CD8-positive, alpha-beta T cell (primary cell): ENCODE measurements at regions of chr17 and their contacts with region 1.

Region 1: DNA sequence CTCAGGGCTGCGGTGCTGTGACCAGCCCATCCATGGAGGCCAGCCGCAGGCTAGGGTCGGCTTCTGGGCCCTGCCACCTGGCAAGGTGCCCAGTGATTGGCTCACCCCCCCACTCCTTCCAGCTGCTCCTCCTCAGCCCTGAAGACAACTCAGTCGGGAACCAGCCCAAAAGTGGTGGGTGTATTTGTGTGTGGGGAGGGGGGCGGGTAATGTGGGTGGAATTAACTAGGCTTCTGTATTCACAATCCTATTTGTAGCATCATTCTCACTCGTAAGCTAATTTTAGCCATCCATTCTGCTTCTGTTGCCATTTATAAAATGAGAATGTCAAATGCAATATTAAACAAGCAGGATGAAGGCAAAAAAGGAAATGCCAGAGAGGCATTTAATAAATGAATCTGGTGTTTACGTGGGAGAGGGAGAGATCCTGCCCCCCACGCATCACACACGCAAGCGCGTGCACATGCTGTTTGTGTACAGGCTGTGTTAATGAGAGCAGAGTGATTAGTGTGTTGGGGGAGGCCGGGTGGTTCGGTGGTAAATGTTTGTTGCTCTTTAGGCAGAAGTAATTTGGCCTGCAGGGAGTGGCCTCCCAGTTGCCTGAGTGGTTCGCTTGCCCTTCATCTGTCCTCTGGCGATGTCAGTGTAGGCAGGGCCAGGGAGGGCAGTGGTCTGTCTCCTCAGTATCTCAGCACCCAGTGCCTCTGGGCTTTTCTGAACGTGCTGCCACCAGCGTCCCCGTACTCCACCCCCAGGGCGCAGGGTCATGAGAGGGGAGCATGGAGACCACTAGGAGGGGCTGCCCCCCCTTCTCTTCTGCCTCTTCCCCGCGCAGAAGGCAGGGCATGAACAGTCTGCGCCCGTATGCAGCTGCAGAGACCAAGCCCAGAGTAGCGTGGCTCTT is 140.1 kb downstream of the CCDC182 start:
- DNase-seq: peak in 8 of 9 experiments; percentile 15 to 83 (median 60)
- ATAC-seq: peak; percentile 60
- H3K4me3 ChIP-seq: peak overlapping the region in 1 of 2 experiments; percentile 8
- H3K4me3 Mint-ChIP-seq: peak overlapping the region; percentile 76
- H3K27ac ChIP-seq: peak overlapping the region; percentile 67 to 81
- H3K27ac Mint-ChIP-seq: peak overlapping the region; percentile 94
- H3K4me1 ChIP-seq: peaks cover 99% of the 10 kb centered on the region
- H3K4me1 Mint-ChIP-seq: peaks cover 95% of the 10 kb centered on the region
- H3K27me3 ChIP-seq: no peaks in the 10 kb centered on the region
- H3K27me3 Mint-ChIP-seq: no peaks in the 10 kb centered on the region
- CTCF ChIP-seq: no peak

Region 2: GRCh38 chr17:57622683-57623433 is 17.8 kb after region 1 on chr17:
- CTCF ChIA-PET with region 1: interaction called, 10 read pairs
- POLR2A ChIA-PET with region 1: interaction called, 3 read pairs
- intact Hi-C with region 1: no loop called
- DNase-seq: no peak
- ATAC-seq: no peak
- H3K4me3 ChIP-seq: no peak overlapping the region
- H3K4me3 Mint-ChIP-seq: no peak overlapping the region
- H3K27ac ChIP-seq: no peak overlapping the region
- H3K27ac Mint-ChIP-seq: no peak overlapping the region
- H3K4me1 ChIP-seq: no peaks in the 10 kb centered on the region
- H3K4me1 Mint-ChIP-seq: peaks cover 12% of the 10 kb centered on the region
- H3K27me3 ChIP-seq: no peaks in the 10 kb centered on the region
- H3K27me3 Mint-ChIP-seq: no peaks in the 10 kb centered on the region
- CTCF ChIP-seq: no peak